A549 (cell line): ENCODE measurements at regions of chr12 and their contacts with region 1.

Region 1: GRCh38 chr12:57815177-57816000 is 3.1 kb downstream of the AVIL start:
- DNase-seq: peak in 1 of 2 experiments; percentile 24
- ATAC-seq: peak; percentile 6 to 54; a peak in 5 of 6 replicates
- H3K4me3 ChIP-seq: no peak overlapping the region
- H3K27ac ChIP-seq: no peak overlapping the region
- H3K4me1 ChIP-seq: peaks cover 7% of the 10 kb centered on the region
- CTCF ChIP-seq: no peak
- EP300 ChIP-seq: no peak
- POLR2A ChIP-seq: no peak
- RAD21 ChIP-seq: 0 out of 5 replicates have a peak, but pooled peaks of 1 of the 2 experiments have one; percentile 15

Region 2: DNA sequence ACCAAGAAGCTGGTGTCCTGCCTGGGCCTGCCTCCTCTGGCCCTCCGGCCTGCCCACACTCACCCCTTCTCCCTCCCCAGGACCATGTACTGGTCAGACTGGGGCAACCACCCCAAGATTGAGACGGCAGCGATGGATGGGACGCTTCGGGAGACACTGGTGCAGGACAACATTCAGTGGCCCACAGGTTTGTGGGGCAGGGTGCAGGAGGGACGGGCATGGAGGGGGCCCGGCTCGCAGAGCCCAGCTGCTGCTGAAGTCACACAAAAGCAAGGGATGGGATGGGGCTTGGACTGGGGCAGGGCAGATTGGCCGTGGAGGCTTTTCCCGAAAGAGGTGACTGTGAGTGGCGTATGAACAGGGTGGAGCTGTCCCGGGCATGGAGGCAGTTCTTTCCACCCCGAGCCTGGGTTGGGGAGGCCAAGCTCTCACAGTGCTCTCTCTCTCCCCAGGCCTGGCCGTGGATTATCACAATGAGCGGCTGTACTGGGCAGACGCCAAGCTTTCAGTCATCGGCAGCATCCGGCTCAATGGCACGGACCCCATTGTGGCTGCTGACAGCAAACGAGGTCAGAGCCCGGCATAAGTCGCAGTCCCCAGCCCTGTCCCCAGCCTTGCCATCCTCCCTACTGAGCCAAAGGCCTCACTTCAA is 606.6 kb before region 1 on chr12:
- CTCF ChIA-PET with region 1: no interaction called
- POLR2A ChIA-PET with region 1: no interaction called
- DNase-seq: no peak
- ATAC-seq: no peak
- H3K4me3 ChIP-seq: no peak overlapping the region
- H3K27ac ChIP-seq: no peak overlapping the region
- H3K4me1 ChIP-seq: peaks cover 8% of the 10 kb centered on the region
- CTCF ChIP-seq: no peak
- EP300 ChIP-seq: no peak
- POLR2A ChIP-seq: no peak
- RAD21 ChIP-seq: no peak

Region 3: GRCh38 chr12:57803319-57803893 is 12.0 kb before region 1 on chr12:
- CTCF ChIA-PET with region 1: interaction called, 40 read pairs
- POLR2A ChIA-PET with region 1: no interaction called
- DNase-seq: peak; percentile 53 to 69
- ATAC-seq: peak; percentile 86 to 91
- H3K4me3 ChIP-seq: no peak overlapping the region
- H3K27ac ChIP-seq: no peak overlapping the region
- H3K4me1 ChIP-seq: no peaks in the 10 kb centered on the region
- CTCF ChIP-seq: peak; percentile 70
- EP300 ChIP-seq: no peak
- POLR2A ChIP-seq: no peak
- RAD21 ChIP-seq: peak; percentile 61 to 63

Region 4: GRCh38 chr12:57829025-57829777 is 13.8 kb after region 1 on chr12:
- CTCF ChIA-PET with region 1: interaction called, 10 read pairs
- POLR2A ChIA-PET with region 1: no interaction called
- DNase-seq: no peak
- ATAC-seq: no peak
- H3K4me3 ChIP-seq: no peak overlapping the region
- H3K27ac ChIP-seq: no peak overlapping the region
- H3K4me1 ChIP-seq: peaks cover 4% of the 10 kb centered on the region; the same call in 1 of the 3 replicates
- CTCF ChIP-seq: no peak
- EP300 ChIP-seq: no peak
- POLR2A ChIP-seq: no peak
- RAD21 ChIP-seq: no peak